H1 (cell line): ENCODE measurements at regions of chr1 and their contacts with region 1.

Region 1: DNA sequence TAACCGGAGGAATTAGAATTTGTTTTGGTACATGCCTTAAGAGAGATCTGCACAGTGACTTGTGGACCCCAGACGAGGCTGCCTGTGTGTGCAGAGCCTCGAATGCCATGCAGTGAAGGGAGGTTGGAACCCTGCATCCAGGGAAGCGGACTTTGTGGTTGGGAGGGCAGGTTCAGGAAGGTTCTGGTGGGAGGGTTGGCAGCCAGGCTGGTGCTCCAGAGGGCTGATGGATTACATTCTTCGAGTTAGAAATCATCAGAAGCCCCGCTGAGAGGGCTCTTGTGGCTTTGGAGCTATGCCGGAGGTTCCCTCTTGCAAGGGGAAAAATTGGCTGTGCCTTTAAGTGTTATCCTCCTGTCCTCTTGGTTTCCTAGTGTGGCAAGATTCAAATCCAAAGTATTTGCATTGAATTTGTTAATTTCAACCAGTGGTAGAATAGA is 21.1 kb downstream of the ROR1 start:
- DNase-seq: peak; percentile 60 to 62
- H3K4me3 ChIP-seq: no peak overlapping the region; a peak in 2 of 8 replicates
- H3K27ac ChIP-seq: no peak overlapping the region
- H3K4me1 ChIP-seq: peaks cover 40 to 66% (median 59%) of the 10 kb centered on the region in 4 experiments
- H3K27me3 ChIP-seq: no peaks in the 10 kb centered on the region
- CTCF ChIP-seq: no peak
- EP300 ChIP-seq: no peak
- POLR2A ChIP-seq: no peak
- RAD21 ChIP-seq: no peak

Region 2: DNA sequence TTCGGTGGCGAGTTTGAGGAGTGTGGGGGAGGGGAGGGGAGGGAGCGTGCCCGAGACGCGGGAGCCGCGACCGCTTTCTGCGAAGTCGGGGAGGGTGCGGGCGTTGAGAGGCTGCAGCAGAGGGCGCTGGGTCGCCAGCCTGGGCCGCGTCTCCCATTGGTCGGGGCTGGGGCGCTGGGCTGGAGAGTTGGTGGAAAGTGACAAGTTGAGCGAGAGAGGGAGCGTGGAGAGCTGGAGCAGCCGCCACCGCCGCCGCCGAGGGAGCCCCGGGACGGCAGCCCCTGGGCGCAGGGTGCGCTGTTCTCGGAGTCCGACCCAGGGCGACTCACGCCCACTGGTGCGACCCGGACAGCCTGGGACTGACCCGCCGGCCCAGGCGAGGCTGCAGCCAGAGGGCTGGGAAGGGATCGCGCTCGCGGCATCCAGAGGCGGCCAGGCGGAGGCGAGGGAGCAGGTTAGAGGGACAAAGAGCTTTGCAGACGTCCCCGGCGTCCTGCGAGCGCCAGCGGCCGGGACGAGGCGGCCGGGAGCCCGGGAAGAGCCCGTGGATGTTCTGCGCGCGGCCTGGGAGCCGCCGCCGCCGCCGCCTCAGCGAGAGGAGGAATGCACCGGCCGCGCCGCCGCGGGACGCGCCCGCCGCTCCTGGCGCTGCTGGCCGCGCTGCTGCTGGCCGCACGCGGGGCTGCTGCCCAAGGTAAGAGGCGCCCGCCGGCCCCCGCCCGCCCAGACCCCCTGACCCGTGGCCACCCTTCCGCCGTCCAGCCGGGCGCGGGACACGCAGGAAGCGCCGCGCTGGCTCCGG is 20.9 kb before region 1 on chr1 and contains the start of gene ROR1:
- CTCF ChIA-PET with region 1: interaction called, 50 read pairs
- POLR2A ChIA-PET with region 1: interaction called, 47 read pairs
- DNase-seq: peak; percentile 60 to 91
- H3K4me3 ChIP-seq: peak within 1 kb of the TSS; percentile 79 to 89 (median 82)
- H3K27ac ChIP-seq: peak within 1 kb of the TSS; percentile 68; the same call in 1 of the 2 replicates
- H3K4me1 ChIP-seq: peaks cover 16 to 35% (median 21%) of the 10 kb centered on the region in 4 experiments; a peak in 6 of 7 replicates
- H3K27me3 ChIP-seq: no peaks in the 10 kb centered on the region
- CTCF ChIP-seq: peak; percentile 72 to 76 (median 72)
- EP300 ChIP-seq: peak in 1 of 2 experiments; percentile 20; a peak in 1 of 3 replicates
- POLR2A ChIP-seq: no peak; a peak in 1 of 3 replicates
- RAD21 ChIP-seq: peak; percentile 77 to 79
- total RNA-seq, gene ROR1: 70.3 and 73.6 TPM in 2 replicates

Region 3: GRCh38 chr1:63779338-63780211 is 15.4 kb before region 1 on chr1:
- CTCF ChIA-PET with region 1: interaction called, 50 read pairs
- POLR2A ChIA-PET with region 1: interaction called, 47 read pairs
- DNase-seq: no peak
- H3K4me3 ChIP-seq: peak overlapping the region in 3 of 4 experiments; percentile 16 to 31 (median 19); a peak in 3 of 8 replicates
- H3K27ac ChIP-seq: peak overlapping the region; percentile 53; the same call in 1 of the 2 replicates
- H3K4me1 ChIP-seq: peaks cover 30 to 74% (median 51%) of the 10 kb centered on the region in 4 experiments; a peak in 6 of 7 replicates
- H3K27me3 ChIP-seq: no peaks in the 10 kb centered on the region
- CTCF ChIP-seq: no peak
- EP300 ChIP-seq: no peak
- POLR2A ChIP-seq: no peak
- RAD21 ChIP-seq: no peak